Adrenal gland (tissue), 19 donors: ENCODE measurements at regions of chr22 and their contacts with region 1.

Region 1: GRCh38 chr22:30326706-30327362 is at the start of gene TBC1D10A:
- DNase-seq: peak; percentile 88 to 95 (median 90)
- H3K4me3 ChIP-seq: peak within 1 kb of the TSS; percentile 60 to 92 (median 63)
- H3K27ac ChIP-seq: peak within 1 kb of the TSS; percentile 35 to 91 (median 81)
- H3K4me1 ChIP-seq: peaks cover 34 to 47% of the 10 kb centered on the region in 2 donors
- H3K27me3 ChIP-seq: no peaks in the 10 kb centered on the region
- CTCF ChIP-seq: no peak
- POLR2A ChIP-seq: peak; percentile 64 to 90
- total RNA-seq, gene TBC1D10A: 22.0 to 55.0 (median 31.4) TPM

Region 2: GRCh38 chr22:30289134-30289979 is 37.5 kb before region 1 on chr22 and contains the start of gene CASTOR1:
- intact Hi-C with region 1: loop called in 1 of 2 experiments (anchors 5 kb)
- DNase-seq: peak; percentile 98 to 99 (median 99)
- H3K4me3 ChIP-seq: peak within 1 kb of the TSS; percentile 42 to 53 (median 51)
- H3K27ac ChIP-seq: peak within 1 kb of the TSS; percentile 71 to 92 (median 87)
- H3K4me1 ChIP-seq: peaks cover 30 to 40% of the 10 kb centered on the region in 2 donors
- H3K27me3 ChIP-seq: no peaks in the 10 kb centered on the region
- CTCF ChIP-seq: peak in 1 of 6 experiments; percentile 6
- POLR2A ChIP-seq: peak; percentile 57 to 72
- total RNA-seq, gene CASTOR1: 5.5 to 20.1 (median 15.0) TPM